ENCODE measurements at regions of chr2 and their contacts with region 1.

Region 1: DNA sequence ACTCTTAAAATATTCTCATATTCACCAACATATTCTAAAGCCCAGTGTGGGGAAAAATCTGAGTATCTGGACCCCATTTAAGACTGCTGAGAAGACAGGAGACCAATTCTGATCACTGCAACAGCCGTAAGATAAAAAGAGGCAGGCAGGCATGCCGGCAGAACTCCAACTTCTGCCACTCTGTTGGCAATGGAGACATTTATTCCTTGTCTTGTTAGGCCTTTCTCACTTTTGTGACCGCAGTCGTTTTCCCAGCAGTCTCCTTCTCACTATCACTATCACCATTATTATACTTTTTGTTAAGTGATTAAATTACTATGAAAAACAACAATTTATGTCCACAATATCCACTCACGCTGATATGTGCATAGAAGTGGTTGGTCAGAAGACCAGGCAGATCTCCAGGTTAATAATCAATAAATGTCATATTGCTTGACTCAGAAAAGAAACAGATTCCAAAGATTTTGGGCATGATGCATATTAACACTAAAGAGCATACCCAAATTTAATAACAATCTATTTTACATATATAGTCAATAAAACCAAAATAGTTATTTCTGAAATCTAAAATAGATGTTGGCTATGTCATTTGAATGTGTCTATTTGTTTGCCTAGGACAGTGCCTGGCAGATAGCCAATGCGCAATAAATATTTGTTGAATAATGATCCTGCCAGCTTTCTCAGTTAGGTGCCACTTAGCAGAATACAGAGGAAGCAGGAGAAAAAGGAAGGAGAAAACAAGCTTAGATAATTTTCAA is 38.2 kb downstream of the SESTD1 start:
- DNase-seq: peak; percentile 18 to 63 (median 51)
- ATAC-seq: peak; percentile 78 to 90 (median 82)
- H3K4me3 ChIP-seq: peak overlapping the region in 2 of 3 donors; percentile 0 to 24
- H3K27ac ChIP-seq: peak overlapping the region in 2 of 3 donors; percentile 27 to 47
- H3K4me1 ChIP-seq: peaks cover 0 to 9% (median 4%) of the 10 kb centered on the region in 4 donors
- H3K27me3 ChIP-seq: no peaks in the 10 kb centered on the region
- CTCF ChIP-seq: no peak
- POLR2A ChIP-seq: no peak

Region 2: DNA sequence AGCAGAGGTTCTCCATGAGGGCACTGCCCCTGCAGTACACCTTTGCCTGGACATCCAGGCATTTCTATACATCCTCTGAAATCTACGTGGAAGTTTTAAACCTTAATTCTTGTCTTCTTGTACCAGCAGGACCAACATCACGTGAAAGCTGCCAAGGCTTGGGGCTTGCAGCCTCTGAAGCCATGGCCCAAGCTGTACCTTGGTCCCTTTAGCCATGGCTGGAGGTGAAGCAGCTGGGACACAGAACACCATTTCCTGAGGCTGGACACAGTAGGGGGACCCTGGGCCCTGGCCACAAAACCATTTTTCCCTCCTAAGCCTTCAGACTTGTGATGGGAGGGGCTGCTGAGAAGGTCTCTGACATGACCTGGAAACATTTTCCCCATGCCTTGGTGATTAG is 143.7 kb before region 1 on chr2:
- intact Hi-C with region 1: no loop called
- DNase-seq: no peak
- ATAC-seq: no peak
- H3K4me3 ChIP-seq: no peak overlapping the region
- H3K27ac ChIP-seq: no peak overlapping the region
- H3K4me1 ChIP-seq: no peaks in the 10 kb centered on the region
- H3K27me3 ChIP-seq: no peaks in the 10 kb centered on the region
- CTCF ChIP-seq: no peak
- POLR2A ChIP-seq: no peak

Region 3: GRCh38 chr2:179336818-179337534 is 110.6 kb after region 1 on chr2:
- intact Hi-C with region 1: loop called in 1 of 2 experiments (anchors 10 kb)
- DNase-seq: no peak
- ATAC-seq: no peak
- H3K4me3 ChIP-seq: no peak overlapping the region
- H3K27ac ChIP-seq: no peak overlapping the region
- H3K4me1 ChIP-seq: peaks cover 0 to 17% (median 0%) of the 10 kb centered on the region in 4 donors
- H3K27me3 ChIP-seq: no peaks in the 10 kb centered on the region
- CTCF ChIP-seq: no peak
- POLR2A ChIP-seq: no peak

Region 4: GRCh38 chr2:179768765-179769164 is 542.4 kb after region 1 on chr2:
- intact Hi-C with region 1: no loop called
- DNase-seq: no peak
- ATAC-seq: no peak
- H3K4me3 ChIP-seq: no peak overlapping the region
- H3K27ac ChIP-seq: no peak overlapping the region
- H3K4me1 ChIP-seq: no peaks in the 10 kb centered on the region
- H3K27me3 ChIP-seq: no peaks in the 10 kb centered on the region
- CTCF ChIP-seq: no peak
- POLR2A ChIP-seq: no peak